MCF 10A (cell line): ENCODE measurements at regions of chr9 and their contacts with region 1.

Region 1: GRCh38 chr9:136885950-136886578 is at the start of gene TRAF2:
- DNase-seq: peak; percentile 97
- H3K4me3 Mint-ChIP-seq: peak within 1 kb of the TSS; percentile 84
- H3K27ac Mint-ChIP-seq: peak within 1 kb of the TSS; percentile 71
- H3K4me1 Mint-ChIP-seq: peaks cover 6% of the 10 kb centered on the region
- H3K27me3 Mint-ChIP-seq: no peaks in the 10 kb centered on the region
- CTCF ChIP-seq: no peak
- total RNA-seq, gene TRAF2: 10.7 and 14.1 TPM in 2 replicates

Region 2: GRCh38 chr9:136482793-136483588 is 403.1 kb before region 1 on chr9 and contains the start of gene SEC16A:
- CTCF ChIA-PET with region 1: no interaction called
- POLR2A ChIA-PET with region 1: no interaction called
- intact Hi-C with region 1: no loop called
- DNase-seq: peak; percentile 98
- H3K4me3 Mint-ChIP-seq: peak within 1 kb of the TSS; percentile 98
- H3K27ac Mint-ChIP-seq: peak within 1 kb of the TSS; percentile 100
- H3K4me1 Mint-ChIP-seq: peaks cover 10% of the 10 kb centered on the region
- H3K27me3 Mint-ChIP-seq: no peaks in the 10 kb centered on the region
- CTCF ChIP-seq: no peak
- total RNA-seq, gene SEC16A: 85.8 and 88.8 TPM in 2 replicates

Region 3: DNA sequence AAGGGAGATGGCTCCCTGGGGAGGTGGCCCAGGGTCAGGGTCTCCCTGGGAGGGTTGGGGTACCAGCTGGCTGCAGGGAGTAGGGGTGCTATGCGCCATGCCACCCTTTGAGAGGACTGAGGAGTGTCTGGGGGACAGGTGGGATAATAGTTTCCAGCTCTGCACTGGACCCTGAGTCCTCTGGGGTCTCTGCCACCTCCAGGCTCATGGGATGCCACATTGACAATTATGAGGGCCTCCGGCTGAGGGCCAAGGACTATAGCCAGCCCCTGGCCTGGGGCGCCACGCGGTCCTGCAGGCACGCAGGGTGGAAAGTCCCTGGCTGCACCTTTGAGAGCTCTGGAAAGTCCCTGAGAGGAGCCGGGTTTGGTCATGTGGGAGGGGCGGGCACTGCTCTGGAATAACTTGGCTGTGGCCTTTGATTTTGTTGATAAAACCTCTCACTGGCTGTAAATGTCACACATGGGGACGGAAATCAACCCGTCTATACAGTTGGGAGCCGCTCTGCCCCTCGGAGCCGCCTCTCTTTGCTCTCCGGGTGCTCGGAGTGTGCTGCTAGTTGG is 16.3 kb after region 1 on chr9:
- CTCF ChIA-PET with region 1: interaction called, 6 read pairs
- POLR2A ChIA-PET with region 1: interaction called, 28 read pairs
- intact Hi-C with region 1: no loop called
- DNase-seq: peak; percentile 58
- H3K4me3 Mint-ChIP-seq: peak overlapping the region; percentile 55
- H3K27ac Mint-ChIP-seq: peak overlapping the region; percentile 87
- H3K4me1 Mint-ChIP-seq: peaks cover 19% of the 10 kb centered on the region
- H3K27me3 Mint-ChIP-seq: no peaks in the 10 kb centered on the region
- CTCF ChIP-seq: no peak

Region 4: GRCh38 chr9:136931611-136932130 is 45.6 kb after region 1 on chr9:
- CTCF ChIA-PET with region 1: no interaction called
- POLR2A ChIA-PET with region 1: no interaction called
- intact Hi-C with region 1: no loop called
- DNase-seq: no peak
- H3K4me3 Mint-ChIP-seq: no peak overlapping the region
- H3K27ac Mint-ChIP-seq: peak overlapping the region; percentile 67
- H3K4me1 Mint-ChIP-seq: peaks cover 17% of the 10 kb centered on the region
- H3K27me3 Mint-ChIP-seq: no peaks in the 10 kb centered on the region
- CTCF ChIP-seq: no peak

Region 5: GRCh38 chr9:136944519-136945279 is 58.6 kb after region 1 on chr9 and contains the starts of genes C8G and FBXW5:
- CTCF ChIA-PET with region 1: interaction called, 4 read pairs
- POLR2A ChIA-PET with region 1: interaction called, 10 read pairs
- intact Hi-C with region 1: no loop called
- DNase-seq: peak; percentile 93
- H3K4me3 Mint-ChIP-seq: peak within 1 kb of the TSS; percentile 70
- H3K27ac Mint-ChIP-seq: peak within 1 kb of the TSS; percentile 69
- H3K4me1 Mint-ChIP-seq: no peaks in the 10 kb centered on the region
- H3K27me3 Mint-ChIP-seq: no peaks in the 10 kb centered on the region
- CTCF ChIP-seq: peak; percentile 91
- total RNA-seq, gene C8G: 1.0 and 1.1 TPM in 2 replicates
- total RNA-seq, gene FBXW5: 88.8 and 100 TPM in 2 replicates